Calu3 (cell line): ENCODE measurements at regions of chr16 and their contacts with region 1.

Region 1: GRCh38 chr16:68264128-68265077 is at the start of gene SLC7A6:
- DNase-seq: peak; percentile 86
- H3K4me3 Mint-ChIP-seq: peak within 1 kb of the TSS; percentile 91
- H3K27ac Mint-ChIP-seq: peak within 1 kb of the TSS; percentile 92
- H3K4me1 Mint-ChIP-seq: peaks cover 36% of the 10 kb centered on the region
- H3K27me3 Mint-ChIP-seq: no peaks in the 10 kb centered on the region
- CTCF ChIP-seq: peak; percentile 62
- total RNA-seq, gene SLC7A6: 38.3 and 45.4 TPM in 2 replicates

Region 2: DNA sequence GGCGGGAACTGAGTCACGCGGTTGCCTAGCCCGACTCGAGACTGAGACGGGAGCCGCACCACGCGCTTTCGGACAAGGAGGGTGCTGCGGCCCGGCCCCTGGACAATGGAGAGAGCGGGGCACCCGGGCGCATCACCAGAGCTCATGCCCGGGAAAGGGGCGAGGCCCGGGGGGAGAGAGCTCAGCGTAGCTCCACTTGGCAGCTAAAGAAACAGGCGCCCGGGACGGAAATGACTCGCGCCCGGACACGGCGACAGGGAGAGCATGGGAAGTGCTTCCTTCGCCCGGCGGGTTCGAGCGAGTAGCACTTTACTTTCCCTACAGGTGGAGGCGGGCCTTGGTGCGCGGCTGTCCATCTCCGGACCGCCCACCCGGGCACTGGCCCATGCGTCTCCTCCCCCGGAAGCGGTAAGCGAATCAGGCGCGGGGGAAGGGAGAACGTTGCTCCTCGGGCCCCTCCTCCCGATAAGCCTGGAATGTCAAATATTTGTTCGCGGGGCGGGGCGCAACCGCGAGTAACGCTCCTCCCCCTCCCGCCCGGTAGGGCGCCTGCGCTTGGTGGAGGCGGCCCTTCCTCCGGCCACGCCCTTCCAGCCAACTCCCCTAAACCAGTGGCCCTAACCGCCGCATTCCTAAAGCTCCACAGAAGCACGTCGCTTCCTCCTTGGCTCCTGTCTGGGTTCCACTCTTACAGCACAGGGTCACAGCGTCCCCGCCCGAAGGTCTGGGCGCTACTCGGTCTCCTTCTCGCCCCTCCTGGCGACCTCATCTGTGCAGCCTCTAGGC is 27.0 kb before region 1 on chr16:
- CTCF ChIA-PET with region 1: interaction called, 12 read pairs
- intact Hi-C with region 1: no loop called
- DNase-seq: peak; percentile 99
- H3K4me3 Mint-ChIP-seq: peak overlapping the region; percentile 74
- H3K27ac Mint-ChIP-seq: peak overlapping the region; percentile 73
- H3K4me1 Mint-ChIP-seq: peaks cover 30% of the 10 kb centered on the region
- H3K27me3 Mint-ChIP-seq: no peaks in the 10 kb centered on the region
- CTCF ChIP-seq: no peak

Region 3: DNA sequence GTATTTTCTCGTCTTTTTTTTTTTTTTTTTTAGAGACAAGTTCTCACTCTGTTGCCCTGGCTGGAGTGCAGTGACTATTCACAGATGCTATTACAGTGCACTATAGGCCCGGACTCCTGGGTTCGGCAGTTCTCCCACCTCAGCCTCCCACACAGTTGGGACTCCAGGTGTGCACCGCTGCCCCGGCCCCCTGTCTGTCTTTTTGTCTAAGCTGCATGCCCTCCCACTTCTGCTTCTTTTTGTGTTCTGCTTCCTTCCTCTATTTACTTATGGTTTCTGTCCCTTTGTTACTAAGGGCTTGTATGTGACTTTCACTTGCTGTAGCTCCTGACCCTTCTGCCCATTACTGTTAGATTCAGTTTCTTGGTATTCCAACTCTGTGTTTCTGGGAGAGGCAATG is 20.4 kb after region 1 on chr16:
- CTCF ChIA-PET with region 1: interaction called, 4 read pairs
- intact Hi-C with region 1: loop called (anchors 1 kb)
- DNase-seq: no peak
- H3K4me3 Mint-ChIP-seq: no peak overlapping the region
- H3K27ac Mint-ChIP-seq: no peak overlapping the region
- H3K4me1 Mint-ChIP-seq: no peaks in the 10 kb centered on the region
- H3K27me3 Mint-ChIP-seq: no peaks in the 10 kb centered on the region
- CTCF ChIP-seq: no peak

Region 4: GRCh38 chr16:68310761-68311511 is 46.5 kb after region 1 on chr16 and contains the starts of genes PRMT7 and SLC7A6OS:
- CTCF ChIA-PET with region 1: interaction called, 13 read pairs
- intact Hi-C with region 1: loop called (anchors 5 kb)
- DNase-seq: peak; percentile 94
- H3K4me3 Mint-ChIP-seq: peak within 1 kb of the TSS; percentile 99
- H3K27ac Mint-ChIP-seq: peak within 1 kb of the TSS; percentile 88
- H3K4me1 Mint-ChIP-seq: peaks cover 12% of the 10 kb centered on the region
- H3K27me3 Mint-ChIP-seq: no peaks in the 10 kb centered on the region
- CTCF ChIP-seq: no peak
- total RNA-seq, gene PRMT7: 49.4 and 57.8 TPM in 2 replicates
- total RNA-seq, gene SLC7A6OS: 28.4 and 34.9 TPM in 2 replicates

Region 5: GRCh38 chr16:68328151-68328859 is 63.9 kb after region 1 on chr16:
- CTCF ChIA-PET with region 1: interaction called, 8 read pairs
- intact Hi-C with region 1: loop called (anchors 1 kb)
- DNase-seq: peak; percentile 85
- H3K4me3 Mint-ChIP-seq: no peak overlapping the region
- H3K27ac Mint-ChIP-seq: no peak overlapping the region
- H3K4me1 Mint-ChIP-seq: no peaks in the 10 kb centered on the region
- H3K27me3 Mint-ChIP-seq: no peaks in the 10 kb centered on the region
- CTCF ChIP-seq: peak; percentile 93